ENCODE measurements at regions of chr10 and their contacts with region 1.

Region 1: DNA sequence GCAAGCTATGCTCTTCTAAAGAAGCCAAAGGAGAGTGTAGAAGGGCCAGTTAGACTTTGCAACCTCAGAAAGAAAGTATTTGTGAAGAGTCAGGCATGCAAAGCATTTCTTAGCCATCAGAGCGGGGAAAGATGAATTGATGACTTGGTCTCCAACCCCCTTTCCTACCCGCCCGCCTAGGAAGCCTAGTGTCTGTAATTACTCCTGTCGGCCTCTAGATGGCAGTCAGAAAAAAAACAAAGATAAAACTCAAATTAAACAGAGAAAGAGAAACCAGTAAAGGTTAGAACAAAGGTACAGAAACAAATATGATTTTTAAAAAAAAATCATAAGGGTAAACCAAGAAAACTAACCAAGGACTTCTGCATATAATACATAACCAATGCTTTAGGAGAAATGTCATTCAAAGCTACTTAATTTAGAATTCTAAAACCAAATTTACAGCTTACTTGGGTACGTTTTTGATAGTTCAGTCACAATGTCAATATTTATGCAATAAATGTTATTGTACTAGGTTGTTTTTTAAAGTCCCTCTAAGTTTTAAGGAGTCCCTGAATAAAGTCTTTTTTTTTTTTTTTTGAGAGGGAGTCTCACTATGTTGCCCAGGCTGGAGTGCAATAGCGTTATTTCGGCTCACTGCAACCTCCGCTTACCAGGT is 97.6 kb downstream of the LYZL1 start:
- DNase-seq: peak; percentile 40
- ATAC-seq: no peak
- H3K4me3 ChIP-seq: no peak overlapping the region
- H3K4me3 Mint-ChIP-seq: no peak overlapping the region
- H3K27ac ChIP-seq: no peak overlapping the region
- H3K27ac Mint-ChIP-seq: no peak overlapping the region
- H3K4me1 ChIP-seq: no peaks in the 10 kb centered on the region
- H3K4me1 Mint-ChIP-seq: no peaks in the 10 kb centered on the region
- H3K27me3 ChIP-seq: no peaks in the 10 kb centered on the region
- H3K27me3 Mint-ChIP-seq: no peaks in the 10 kb centered on the region
- CTCF ChIP-seq: peak; percentile 84

Region 2: DNA sequence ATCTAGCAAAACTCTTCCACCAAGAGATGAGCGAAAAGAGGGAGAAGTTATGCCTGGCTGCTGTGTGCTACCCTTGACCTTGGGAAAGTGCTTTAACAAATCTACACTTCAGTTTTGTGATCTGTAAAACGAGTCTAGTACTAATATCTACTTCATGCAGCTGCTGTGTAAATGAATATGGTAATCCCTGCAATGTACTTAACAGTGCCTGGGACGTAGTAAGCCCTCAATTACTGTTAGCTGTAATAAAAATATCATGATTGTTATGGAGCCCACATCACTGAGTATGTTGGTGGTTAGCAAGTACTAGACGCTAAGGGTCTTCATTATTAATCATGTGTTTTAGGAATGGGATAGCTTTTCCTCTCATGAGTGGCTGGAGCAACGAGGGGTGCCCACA is 17.1 kb before region 1 on chr10:
- CTCF ChIA-PET with region 1: no interaction called
- POLR2A ChIA-PET with region 1: no interaction called
- intact Hi-C with region 1: no loop called
- DNase-seq: no peak
- ATAC-seq: no peak
- H3K4me3 ChIP-seq: no peak overlapping the region
- H3K4me3 Mint-ChIP-seq: no peak overlapping the region
- H3K27ac ChIP-seq: no peak overlapping the region
- H3K27ac Mint-ChIP-seq: no peak overlapping the region
- H3K4me1 ChIP-seq: no peaks in the 10 kb centered on the region
- H3K4me1 Mint-ChIP-seq: no peaks in the 10 kb centered on the region
- H3K27me3 ChIP-seq: peaks cover 0 to 3% (median 0%) of the 10 kb centered on the region in 4 experiments
- H3K27me3 Mint-ChIP-seq: peaks cover 6% of the 10 kb centered on the region
- CTCF ChIP-seq: no peak

Region 3: GRCh38 chr10:29409241-29410057 is 23.0 kb after region 1 on chr10:
- CTCF ChIA-PET with region 1: interaction called, 3 read pairs
- POLR2A ChIA-PET with region 1: no interaction called
- intact Hi-C with region 1: loop called (anchors 2 kb)
- DNase-seq: peak; percentile 36
- ATAC-seq: peak; percentile 51
- H3K4me3 ChIP-seq: peak overlapping the region; percentile 47 to 71 (median 64)
- H3K4me3 Mint-ChIP-seq: peak overlapping the region; percentile 96
- H3K27ac ChIP-seq: peak overlapping the region in 1 of 2 donors; percentile 53
- H3K27ac Mint-ChIP-seq: peak overlapping the region; percentile 63
- H3K4me1 ChIP-seq: peaks cover 0 to 5% of the 10 kb centered on the region in 2 donors
- H3K4me1 Mint-ChIP-seq: peaks cover 17% of the 10 kb centered on the region
- H3K27me3 ChIP-seq: peaks cover 0 to 2% (median 0%) of the 10 kb centered on the region in 4 experiments
- H3K27me3 Mint-ChIP-seq: peaks cover 5% of the 10 kb centered on the region
- CTCF ChIP-seq: no peak

Measured in B cell (primary cell).